ENCODE measurements at regions of chr1 and their contacts with region 1.

Region 1: DNA sequence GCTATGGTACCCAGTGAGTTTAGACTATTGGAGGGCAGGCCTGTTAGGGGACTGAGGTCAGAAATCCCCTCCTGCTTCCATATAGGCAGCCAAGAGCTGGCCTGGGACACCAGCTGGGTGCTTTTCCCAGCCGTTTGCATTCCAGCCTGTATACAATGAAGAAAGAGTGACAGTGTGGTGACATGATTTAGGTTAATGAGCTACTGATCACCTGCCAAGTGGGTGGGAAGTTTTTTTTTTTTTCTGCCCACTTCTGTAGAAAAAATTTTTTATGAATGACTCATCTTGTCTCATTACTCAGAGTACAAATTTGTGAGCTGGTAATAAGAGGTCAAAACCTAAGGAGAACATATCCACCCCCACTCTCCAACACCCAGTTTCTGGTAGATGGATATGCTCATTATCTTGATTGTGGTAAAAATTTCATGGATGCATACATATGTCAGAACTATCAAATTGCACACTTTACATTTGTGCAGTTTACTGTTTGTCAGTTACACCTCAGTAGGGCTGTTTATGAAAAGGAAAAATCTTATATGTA is 16.4 kb upstream of the CGN start:
- H3K4me3 ChIP-seq: no peak overlapping the region
- H3K27ac ChIP-seq: no peak overlapping the region
- H3K4me1 ChIP-seq: peaks cover 9% of the 10 kb centered on the region; the same call in 1 of the 2 replicates
- CTCF ChIP-seq: no peak

Region 2: GRCh38 chr1:151510957-151511635 is 16.3 kb after region 1 on chr1 and contains the start of gene CGN:
- CTCF ChIA-PET with region 1: interaction called, 8 read pairs
- POLR2A ChIA-PET with region 1: interaction called, 11 read pairs
- H3K4me3 ChIP-seq: peak within 1 kb of the TSS; percentile 64
- H3K27ac ChIP-seq: peak within 1 kb of the TSS; percentile 75; the same call in 1 of the 2 replicates
- H3K4me1 ChIP-seq: peaks cover 16% of the 10 kb centered on the region
- CTCF ChIP-seq: no peak

Region 3: DNA sequence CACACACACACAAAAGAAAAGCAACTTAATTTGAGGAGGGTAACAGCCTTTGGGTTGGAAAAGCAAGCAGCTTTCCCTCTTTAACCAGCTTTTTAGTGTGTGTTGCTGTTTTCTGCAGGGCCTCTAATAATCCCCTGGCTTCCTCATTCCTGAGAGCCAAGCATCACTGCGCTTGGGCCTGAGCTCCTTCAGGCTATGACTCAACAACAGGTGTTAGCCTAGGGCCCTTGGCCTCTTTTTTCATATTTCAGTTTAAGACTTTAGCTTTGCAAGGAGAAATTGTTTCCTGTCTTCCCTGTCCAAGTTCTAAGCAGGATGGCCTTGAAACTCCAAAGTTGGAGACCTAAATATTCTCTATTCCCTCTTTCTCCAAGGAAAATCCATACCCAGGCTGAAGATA is 90.8 kb after region 1 on chr1:
- CTCF ChIA-PET with region 1: no interaction called
- POLR2A ChIA-PET with region 1: no interaction called
- H3K4me3 ChIP-seq: no peak overlapping the region
- H3K27ac ChIP-seq: no peak overlapping the region
- H3K4me1 ChIP-seq: no peaks in the 10 kb centered on the region
- CTCF ChIP-seq: no peak

Measured in HEK293 (cell line).